Gastrocnemius medialis (tissue), 4 donors: ENCODE measurements at regions of chr11 and their contacts with region 1.

Region 1: DNA sequence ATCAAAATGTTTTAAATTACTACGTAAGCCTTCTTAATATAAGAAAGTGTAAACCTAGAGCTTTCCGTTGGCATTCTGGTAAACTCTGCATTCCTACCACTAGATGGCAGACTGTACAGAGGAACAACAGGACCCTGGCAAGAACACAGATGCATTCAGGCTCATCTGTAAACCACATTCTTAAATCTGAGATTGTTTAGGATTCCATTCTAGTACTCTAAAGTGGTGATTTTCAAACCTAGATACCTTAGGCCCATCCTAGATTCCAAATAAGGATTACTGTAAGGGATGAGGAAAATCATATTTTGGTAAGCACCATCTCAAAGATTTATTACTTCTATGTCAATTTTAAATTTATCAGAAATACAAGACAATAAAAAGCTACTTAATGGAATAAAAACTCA is 26.9 kb downstream of the PICALM start:
- DNase-seq: peak; percentile 54 to 60
- ATAC-seq: peak; percentile 76 to 82
- H3K4me3 ChIP-seq: peak overlapping the region; percentile 30 to 69 (median 42)
- H3K27ac ChIP-seq: peak overlapping the region; percentile 74 to 83 (median 80)
- H3K4me1 ChIP-seq: peaks cover 81 to 84% of the 10 kb centered on the region in 2 donors
- H3K27me3 ChIP-seq: no peaks in the 10 kb centered on the region
- CTCF ChIP-seq: peak; percentile 85 to 96 (median 90)
- POLR2A ChIP-seq: no peak

Region 2: GRCh38 chr11:85854557-85855340 is 187.2 kb before region 1 on chr11:
- in situ Hi-C with region 1: no loop called
- intact Hi-C with region 1: loop called (anchors 10 kb)
- DNase-seq: peak; percentile 68 to 85
- ATAC-seq: peak; percentile 94 to 96
- H3K4me3 ChIP-seq: peak overlapping the region; percentile 54 to 71 (median 61)
- H3K27ac ChIP-seq: peak overlapping the region; percentile 78 to 91 (median 80)
- H3K4me1 ChIP-seq: peaks cover 4 to 5% of the 10 kb centered on the region in 2 donors
- H3K27me3 ChIP-seq: no peaks in the 10 kb centered on the region
- CTCF ChIP-seq: peak; percentile 84 to 99 (median 93)
- POLR2A ChIP-seq: peak in 1 of 2 donors; percentile 35

Region 3: GRCh38 chr11:86068951-86069407 is 27.0 kb after region 1 on chr11 and contains the start of gene PICALM:
- in situ Hi-C with region 1: no loop called
- intact Hi-C with region 1: loop called (anchors 1 kb)
- DNase-seq: peak; percentile 98
- ATAC-seq: peak; percentile 79 to 81
- H3K4me3 ChIP-seq: peak within 1 kb of the TSS; percentile 80 to 100 (median 90)
- H3K27ac ChIP-seq: peak within 1 kb of the TSS; percentile 97 to 100 (median 98)
- H3K4me1 ChIP-seq: peaks cover 32 to 35% of the 10 kb centered on the region in 2 donors
- H3K27me3 ChIP-seq: no peaks in the 10 kb centered on the region
- CTCF ChIP-seq: peak in 2 of 5 experiments; percentile 54 to 67
- POLR2A ChIP-seq: peak; percentile 81 to 90
- total RNA-seq, gene PICALM: 82.3 to 125 (median 107) TPM

Region 4: GRCh38 chr11:86193297-86194095 is 151.5 kb after region 1 on chr11:
- in situ Hi-C with region 1: loop called in 2 of 4 experiments (anchors 5 to 10 kb)
- intact Hi-C with region 1: loop called (anchors 1 kb)
- DNase-seq: peak; percentile 50 to 57
- ATAC-seq: peak; percentile 99 to 100
- H3K4me3 ChIP-seq: peak overlapping the region; percentile 22 to 33 (median 33)
- H3K27ac ChIP-seq: peak overlapping the region; percentile 43 to 56 (median 52)
- H3K4me1 ChIP-seq: peaks cover 8 to 12% of the 10 kb centered on the region in 2 donors
- H3K27me3 ChIP-seq: no peaks in the 10 kb centered on the region
- CTCF ChIP-seq: peak; percentile 69 to 82 (median 79)
- POLR2A ChIP-seq: no peak

Region 5: DNA sequence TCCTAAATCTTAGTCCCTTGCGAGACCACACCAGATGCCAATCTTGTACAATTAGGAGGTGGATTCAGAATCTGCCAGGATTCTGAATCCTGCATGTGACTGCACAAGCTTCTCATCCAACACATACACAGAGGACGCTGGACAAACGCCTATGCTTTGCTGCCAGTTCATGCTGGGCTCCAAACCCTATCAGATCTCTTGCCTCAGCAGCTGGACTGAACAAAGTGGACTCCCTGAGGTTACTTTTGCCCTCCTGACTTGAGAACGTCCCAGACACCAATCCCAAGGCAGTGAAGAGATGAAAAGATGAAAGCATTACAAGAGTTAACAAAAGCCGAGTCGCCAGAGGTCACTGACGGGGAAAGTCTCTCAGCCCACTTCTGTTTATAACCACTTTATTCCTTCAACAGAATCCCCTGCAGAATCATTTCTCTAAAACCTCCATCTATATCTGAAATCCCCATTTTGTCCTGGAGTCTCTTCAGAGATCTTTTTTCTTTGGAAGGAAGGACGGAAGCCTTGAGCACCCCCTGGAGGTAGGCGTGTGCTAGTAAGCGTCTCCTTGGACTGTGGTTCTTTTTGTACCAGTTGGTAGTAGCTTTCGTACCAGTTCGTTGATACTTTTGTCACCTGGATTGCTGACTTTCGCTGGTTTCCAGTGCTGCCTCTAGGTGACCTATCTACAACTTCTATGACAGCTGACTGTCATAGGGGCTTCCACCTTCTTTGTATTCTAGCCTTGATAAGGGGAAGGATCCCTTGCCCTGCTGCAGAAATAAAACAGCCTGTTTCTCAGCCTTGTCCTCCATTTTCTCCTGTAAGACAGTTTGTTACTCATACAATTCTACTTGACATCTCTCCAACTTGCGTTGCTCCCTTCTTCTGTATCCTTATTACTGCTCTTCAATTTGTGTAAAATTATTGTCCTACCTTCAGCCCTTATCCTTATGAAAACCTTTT is 176.4 kb after region 1 on chr11:
- in situ Hi-C with region 1: no loop called
- intact Hi-C with region 1: loop called (anchors 1 kb)
- DNase-seq: peak; percentile 37 to 44
- ATAC-seq: peak; percentile 87 to 95
- H3K4me3 ChIP-seq: peak overlapping the region; percentile 30 to 44 (median 32)
- H3K27ac ChIP-seq: no peak overlapping the region
- H3K4me1 ChIP-seq: peaks cover 5 to 10% of the 10 kb centered on the region in 2 donors
- H3K27me3 ChIP-seq: no peaks in the 10 kb centered on the region
- CTCF ChIP-seq: peak; percentile 74 to 91 (median 86)
- POLR2A ChIP-seq: no peak

Region 6: DNA sequence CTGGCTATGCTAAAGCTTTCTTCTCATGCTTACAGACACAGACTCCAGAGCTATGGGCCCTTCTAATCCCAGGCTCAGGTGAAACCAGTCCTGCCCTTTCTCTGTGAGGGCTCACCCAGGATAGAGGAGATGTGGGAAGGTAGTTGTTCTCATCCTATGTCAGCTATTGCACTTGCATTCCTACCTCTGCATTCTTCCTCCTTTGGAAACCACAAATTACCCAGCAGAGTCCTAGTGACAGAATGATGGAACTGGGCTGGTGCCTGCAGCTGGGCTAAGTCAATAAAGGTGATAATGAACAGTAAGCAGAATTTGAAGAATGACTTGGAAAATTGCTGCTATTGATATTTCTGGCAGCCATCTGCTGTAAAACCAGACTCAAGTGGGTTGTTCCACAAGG is 1555.7 kb after region 1 on chr11:
- in situ Hi-C with region 1: no loop called
- intact Hi-C with region 1: no loop called
- DNase-seq: no peak
- ATAC-seq: no peak
- H3K4me3 ChIP-seq: no peak overlapping the region
- H3K27ac ChIP-seq: no peak overlapping the region
- H3K4me1 ChIP-seq: no peaks in the 10 kb centered on the region
- H3K27me3 ChIP-seq: no peaks in the 10 kb centered on the region
- CTCF ChIP-seq: no peak
- POLR2A ChIP-seq: no peak